K562 (cell line): ENCODE measurements at regions of chr6 and their contacts with region 1.

Region 1: GRCh38 chr6:2988426-2989331 is 11.0 kb upstream of the NQO2 start:
- DNase-seq: peak; percentile 84 to 96 (median 84)
- ATAC-seq: peak; percentile 84
- H3K4me3 ChIP-seq: peak overlapping the region; percentile 71
- H3K27ac ChIP-seq: peak overlapping the region; percentile 99
- H3K4me1 ChIP-seq: peaks cover 56% of the 10 kb centered on the region in 2 experiments
- H3K27me3 ChIP-seq: no peaks in the 10 kb centered on the region
- CTCF ChIP-seq: peak; percentile 81 to 98 (median 94)
- EP300 ChIP-seq: peak; percentile 26; the same call in 1 of the 2 replicates
- POLR2A ChIP-seq: peak; percentile 80
- RAD21 ChIP-seq: peak; percentile 93 to 98

Region 2: GRCh38 chr6:2841264-2842138 is 147.2 kb before region 1 on chr6 and contains the start of gene SERPINB1:
- CTCF ChIA-PET with region 1: interaction called, 26 read pairs
- POLR2A ChIA-PET with region 1: interaction called, 24 read pairs
- in situ Hi-C with region 1: no loop called
- intact Hi-C with region 1: loop called (anchors 1 kb)
- DNase-seq: peak; percentile 92 to 98 (median 94)
- ATAC-seq: peak; percentile 93
- H3K4me3 ChIP-seq: peak within 1 kb of the TSS; percentile 52
- H3K27ac ChIP-seq: peak within 1 kb of the TSS; percentile 84
- H3K4me1 ChIP-seq: peaks cover 27 to 32% of the 10 kb centered on the region in 2 experiments
- H3K27me3 ChIP-seq: no peaks in the 10 kb centered on the region
- CTCF ChIP-seq: peak; percentile 30 to 39 (median 33); a peak in 5 of 6 replicates
- EP300 ChIP-seq: peak; percentile 81
- POLR2A ChIP-seq: peak; percentile 91
- RAD21 ChIP-seq: peak; percentile 15 to 19; a peak in 1 of 4 replicates
- polyA plus RNA-seq, gene SERPINB1: 63.8 to 68.7 TPM

Region 3: DNA sequence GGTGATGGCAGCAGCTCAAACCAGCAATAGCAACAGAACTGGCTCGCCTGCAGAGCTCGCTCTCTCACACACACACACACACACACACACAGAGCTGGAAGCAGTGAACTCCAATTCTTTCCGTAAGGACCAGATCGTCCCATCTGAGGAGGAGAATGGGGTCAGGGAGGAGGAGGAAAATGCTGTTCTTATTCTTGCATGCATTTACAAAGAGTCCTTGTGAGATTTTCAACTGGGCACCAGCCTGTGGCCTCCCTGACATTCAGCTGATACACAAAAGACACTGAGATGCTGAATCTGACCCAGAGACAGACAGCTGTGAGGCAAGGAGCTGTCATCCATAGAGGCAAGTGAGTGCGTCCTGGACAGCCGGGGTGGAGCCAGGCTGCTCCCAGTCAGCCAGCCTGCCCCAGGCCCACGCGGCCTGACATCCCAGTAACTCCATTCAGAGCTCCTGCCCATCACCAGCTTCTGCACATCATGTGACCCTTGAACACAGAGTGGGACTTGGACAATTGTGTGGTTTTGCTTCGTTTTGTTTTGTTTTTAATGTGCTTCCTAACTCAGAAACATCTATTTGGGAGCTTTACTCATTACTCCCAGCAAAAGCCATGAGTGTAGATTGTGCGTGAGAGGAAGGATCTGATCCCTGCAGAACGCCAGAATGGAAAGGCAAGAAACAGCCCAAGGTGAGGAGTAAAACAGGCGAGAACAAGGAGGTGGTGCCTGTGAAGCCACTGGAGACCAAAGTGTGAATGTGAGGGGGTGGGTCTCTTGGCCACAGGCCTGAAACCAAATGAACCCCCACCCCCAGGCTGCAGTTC is 87.6 kb before region 1 on chr6:
- CTCF ChIA-PET with region 1: interaction called, 5 read pairs
- POLR2A ChIA-PET with region 1: interaction called, 10 read pairs
- in situ Hi-C with region 1: no loop called
- intact Hi-C with region 1: no loop called
- DNase-seq: no peak
- ATAC-seq: no peak
- H3K4me3 ChIP-seq: no peak overlapping the region
- H3K27ac ChIP-seq: no peak overlapping the region
- H3K4me1 ChIP-seq: peaks cover 28 to 30% of the 10 kb centered on the region in 2 experiments; a peak in 4 of 5 replicates
- H3K27me3 ChIP-seq: no peaks in the 10 kb centered on the region
- CTCF ChIP-seq: no peak
- EP300 ChIP-seq: no peak
- POLR2A ChIP-seq: no peak
- RAD21 ChIP-seq: no peak

Region 4: GRCh38 chr6:2966347-2966746 is 22.3 kb before region 1 on chr6:
- CTCF ChIA-PET with region 1: no interaction called
- POLR2A ChIA-PET with region 1: interaction called, 10 read pairs
- in situ Hi-C with region 1: no loop called
- intact Hi-C with region 1: loop called (anchors 1 kb)
- DNase-seq: peak in 1 of 4 experiments; percentile 81
- ATAC-seq: peak; percentile 39
- H3K4me3 ChIP-seq: no peak overlapping the region
- H3K27ac ChIP-seq: peak overlapping the region; percentile 61
- H3K4me1 ChIP-seq: peaks cover 47 to 66% of the 10 kb centered on the region in 2 experiments
- H3K27me3 ChIP-seq: no peaks in the 10 kb centered on the region
- CTCF ChIP-seq: no peak
- EP300 ChIP-seq: peak; percentile 28
- POLR2A ChIP-seq: no peak
- RAD21 ChIP-seq: no peak

Region 5: DNA sequence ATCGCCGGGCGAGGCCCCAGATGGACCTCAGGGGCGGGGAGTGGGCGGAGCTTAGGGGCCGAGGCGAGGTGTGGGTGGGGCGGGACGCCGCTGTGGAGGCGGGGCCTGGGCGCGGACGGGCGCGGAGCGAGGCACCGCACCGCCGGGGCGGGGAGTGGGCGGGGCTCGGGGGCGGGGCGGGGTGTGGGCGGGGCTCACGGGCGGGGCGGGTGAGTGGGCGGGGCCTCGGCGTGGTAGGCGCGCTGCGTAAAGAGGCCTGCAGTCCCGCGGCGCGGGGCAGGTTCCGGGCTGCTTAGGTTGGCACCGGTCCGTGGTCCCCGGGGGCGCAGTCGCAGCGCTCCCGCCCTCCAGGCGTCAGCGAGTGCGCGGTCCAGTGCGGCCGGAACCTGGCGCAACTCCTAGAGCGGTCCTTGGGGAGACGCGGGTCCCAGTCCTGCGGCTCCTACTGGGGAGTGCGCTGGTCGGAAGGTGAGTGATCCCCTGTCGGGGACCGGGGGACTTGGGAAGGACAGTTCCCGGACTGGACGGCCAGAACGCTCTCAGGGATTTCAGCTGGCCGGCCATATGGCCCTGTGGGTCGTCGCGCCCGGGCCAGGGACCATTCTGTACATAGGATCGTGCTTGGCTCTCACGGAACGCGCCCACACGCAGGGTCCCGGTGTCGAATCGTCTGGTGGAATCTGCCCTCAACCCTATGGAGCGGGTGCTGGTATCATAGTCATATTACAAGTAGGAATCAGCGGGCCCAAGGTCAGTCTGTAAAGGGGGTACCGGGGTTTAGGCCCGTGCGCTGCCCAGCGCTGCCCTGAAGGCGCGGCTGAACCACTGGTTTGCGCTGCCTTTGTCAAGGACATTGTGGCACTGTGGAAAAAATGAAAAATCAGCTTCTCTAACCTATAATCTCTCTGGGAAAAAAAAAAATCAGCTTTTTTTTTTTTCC is 11.2 kb after region 1 on chr6 and contains the start of gene NQO2:
- CTCF ChIA-PET with region 1: interaction called, 6 read pairs
- POLR2A ChIA-PET with region 1: interaction called, 95 read pairs
- in situ Hi-C with region 1: no loop called
- intact Hi-C with region 1: no loop called
- DNase-seq: peak; percentile 95 to 100 (median 100)
- ATAC-seq: peak; percentile 87
- H3K4me3 ChIP-seq: peak within 1 kb of the TSS; percentile 86
- H3K27ac ChIP-seq: peak within 1 kb of the TSS; percentile 79
- H3K4me1 ChIP-seq: peaks cover 23 to 27% of the 10 kb centered on the region in 2 experiments; a peak in 4 of 5 replicates
- H3K27me3 ChIP-seq: no peaks in the 10 kb centered on the region
- CTCF ChIP-seq: no peak
- EP300 ChIP-seq: no peak
- POLR2A ChIP-seq: peak; percentile 92
- RAD21 ChIP-seq: peak in 1 of 2 experiments; percentile 29; a peak in 2 of 4 replicates
- polyA plus RNA-seq, gene NQO2: 54.6 to 70.1 TPM

Region 6: GRCh38 chr6:3124667-3125066 is 136.0 kb after region 1 on chr6:
- CTCF ChIA-PET with region 1: no interaction called
- POLR2A ChIA-PET with region 1: interaction called, 4 read pairs
- in situ Hi-C with region 1: loop called (anchors 10 kb)
- intact Hi-C with region 1: no loop called
- DNase-seq: no peak
- ATAC-seq: no peak
- H3K4me3 ChIP-seq: no peak overlapping the region
- H3K27ac ChIP-seq: no peak overlapping the region
- H3K4me1 ChIP-seq: peaks cover 8 to 9% of the 10 kb centered on the region in 2 experiments; a peak in 4 of 5 replicates
- H3K27me3 ChIP-seq: no peaks in the 10 kb centered on the region
- CTCF ChIP-seq: no peak
- EP300 ChIP-seq: no peak
- POLR2A ChIP-seq: no peak
- RAD21 ChIP-seq: no peak